Heart left ventricle (tissue), 16 donors: ENCODE measurements at regions of chr22 and their contacts with region 1.

Region 1: DNA sequence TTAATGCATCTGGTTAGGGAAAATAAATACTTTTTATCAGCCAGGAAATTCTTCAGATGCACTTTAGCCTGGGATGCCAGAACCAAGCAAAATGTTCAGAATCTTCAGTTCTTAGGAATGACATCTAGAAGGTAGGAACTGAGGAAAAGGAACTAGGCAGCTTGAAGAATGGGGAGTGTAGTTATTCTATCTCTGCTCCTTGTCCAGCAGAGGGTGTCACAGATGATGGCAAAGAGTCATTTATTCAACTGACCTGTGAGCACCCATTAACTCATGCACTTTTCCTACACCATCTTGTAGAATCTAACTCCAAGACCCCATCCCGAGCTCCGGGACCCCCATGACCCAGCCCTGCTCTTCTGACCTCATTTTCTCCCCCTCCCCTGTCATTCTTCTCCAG is 122.1 kb upstream of the ISX start:
- DNase-seq: no peak
- ATAC-seq: no peak
- H3K4me3 ChIP-seq: no peak overlapping the region
- H3K27ac ChIP-seq: no peak overlapping the region
- H3K4me1 ChIP-seq: no peaks in the 10 kb centered on the region
- H3K27me3 ChIP-seq: peaks cover 0 to 19% (median 0%) of the 10 kb centered on the region in 9 donors
- CTCF ChIP-seq: no peak
- POLR2A ChIP-seq: no peak

Region 2: DNA sequence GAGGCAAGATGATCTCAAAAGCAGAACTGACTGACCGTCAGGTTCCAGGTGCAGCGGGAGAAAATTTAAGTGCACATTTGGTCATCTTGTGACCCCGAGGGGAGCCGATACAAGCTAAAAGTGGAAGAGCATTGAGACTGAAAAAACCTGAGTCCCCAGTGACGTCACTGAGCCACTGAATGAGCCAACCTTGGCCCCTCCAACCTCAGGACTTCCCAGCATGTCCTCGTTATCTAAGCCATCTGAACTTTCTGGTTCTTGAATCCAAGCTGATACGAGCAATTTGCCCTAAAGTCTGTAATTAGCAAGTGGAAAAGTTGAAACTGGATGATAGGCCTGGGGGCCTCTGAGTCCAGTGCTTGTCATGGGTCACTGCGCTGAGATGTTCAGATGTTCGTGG is 71.0 kb after region 1 on chr22:
- intact Hi-C with region 1: loop called in 1 of 10 experiments (anchors 10 kb)
- DNase-seq: no peak
- ATAC-seq: no peak
- H3K4me3 ChIP-seq: no peak overlapping the region
- H3K27ac ChIP-seq: no peak overlapping the region
- H3K4me1 ChIP-seq: no peaks in the 10 kb centered on the region
- H3K27me3 ChIP-seq: peaks cover 0 to 5% (median 0%) of the 10 kb centered on the region in 9 donors
- CTCF ChIP-seq: no peak
- POLR2A ChIP-seq: no peak